ENCODE measurements at regions of chr12 and their contacts with region 1.

Region 1: DNA sequence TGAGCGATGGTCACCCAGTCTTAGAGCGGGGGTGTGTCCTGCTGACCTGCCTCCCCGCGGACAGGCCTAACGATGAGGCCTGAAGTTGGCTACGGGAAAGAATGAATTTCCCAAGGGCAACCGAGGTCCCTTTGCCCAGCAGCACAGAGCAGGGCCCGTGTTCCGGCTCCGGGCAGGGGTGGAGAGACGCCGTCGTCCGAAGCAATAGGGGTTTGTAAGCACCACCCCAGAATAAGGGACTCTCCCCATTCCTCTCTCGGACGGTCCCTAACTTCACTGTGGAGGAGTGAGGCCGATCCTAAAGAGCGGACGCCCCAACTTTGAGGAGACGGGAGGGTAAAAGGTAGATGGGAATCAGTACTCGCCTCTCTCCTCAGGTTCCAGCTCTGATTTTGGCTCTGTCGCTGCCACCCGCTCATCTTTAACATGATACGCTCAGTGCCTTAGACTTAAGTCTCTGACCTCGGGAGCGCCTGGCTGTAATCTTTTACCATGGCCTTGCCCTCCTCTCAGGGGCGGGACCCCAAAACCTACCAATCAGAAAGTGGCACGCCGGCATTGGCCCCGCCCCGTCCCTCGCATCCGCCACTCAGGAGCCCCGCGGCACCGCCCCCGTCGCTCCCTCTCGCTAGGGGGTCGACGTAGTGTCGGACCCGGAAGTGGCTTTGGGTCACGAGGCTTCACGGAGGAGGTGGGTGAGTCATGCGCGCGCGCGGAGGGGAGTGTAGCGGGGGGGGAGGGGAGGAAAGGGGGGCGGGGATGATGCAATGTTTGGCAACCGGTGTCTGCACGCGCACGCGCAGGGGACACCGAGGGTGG is at the start of gene DDIT3:
- DNase-seq: peak; percentile 98 to 99 (median 99)
- ATAC-seq: peak; percentile 89
- H3K4me3 ChIP-seq: peak within 1 kb of the TSS; percentile 100
- H3K4me3 Mint-ChIP-seq: peak within 1 kb of the TSS; percentile 89 to 99 (median 98)
- H3K27ac ChIP-seq: peak within 1 kb of the TSS; percentile 95
- H3K27ac Mint-ChIP-seq: peak within 1 kb of the TSS; percentile 97 to 100 (median 99)
- H3K4me1 ChIP-seq: peaks cover 32 to 41% of the 10 kb centered on the region in 2 donors
- H3K4me1 Mint-ChIP-seq: peaks cover 47 to 80% (median 56%) of the 10 kb centered on the region in 7 donors
- H3K27me3 ChIP-seq: no peaks in the 10 kb centered on the region
- H3K27me3 Mint-ChIP-seq: peaks cover 0 to 7% (median 0%) of the 10 kb centered on the region in 5 donors
- total RNA-seq, gene DDIT3: 19.6 to 124 (median 51.6) TPM

Region 2: DNA sequence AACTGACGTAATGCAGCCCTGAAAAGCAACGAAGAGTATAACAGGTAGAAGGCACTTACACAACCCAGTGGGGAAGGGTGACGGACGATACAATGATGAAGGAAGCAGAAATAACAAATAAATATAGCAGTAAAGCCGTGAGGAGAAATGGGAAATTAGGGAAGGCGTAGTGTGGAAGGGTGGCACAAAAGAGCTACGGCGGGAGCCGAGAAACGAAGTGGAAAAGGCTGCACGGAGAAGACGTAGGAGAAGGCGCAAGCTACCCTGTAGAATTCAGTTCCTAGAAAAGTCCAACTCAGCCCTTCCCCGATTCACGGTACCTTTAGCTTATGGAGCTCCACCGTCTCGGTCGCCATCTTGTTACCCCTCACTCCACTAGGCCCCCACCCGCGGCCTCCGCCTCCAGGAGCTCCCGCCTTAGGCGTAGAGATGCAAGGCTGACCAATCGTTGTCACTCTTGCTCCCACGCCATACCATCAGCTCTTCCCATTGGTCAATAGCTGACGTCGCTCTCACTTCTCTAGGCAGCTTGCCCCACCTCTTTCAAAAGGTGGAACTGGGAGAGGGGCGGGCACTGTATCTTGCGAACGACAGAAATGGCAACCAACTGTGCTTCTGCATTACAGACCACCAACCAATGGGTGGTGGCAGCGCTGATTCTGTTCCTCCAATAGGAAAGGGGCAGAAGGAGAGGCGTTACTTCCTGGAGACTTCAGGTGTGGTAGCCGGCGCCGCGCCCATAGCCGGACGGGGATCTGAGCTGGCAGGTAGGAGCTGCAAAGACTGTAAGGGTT is 1702.7 kb before region 1 on chr12 and contains the starts of genes ORMDL2 and SARNP:
- CTCF ChIA-PET with region 1: no interaction called
- POLR2A ChIA-PET with region 1: no interaction called
- intact Hi-C with region 1: loop called in 1 of 2 experiments (anchors 2 kb)
- DNase-seq: peak; percentile 81 to 99 (median 98)
- ATAC-seq: peak; percentile 96
- H3K4me3 ChIP-seq: peak within 1 kb of the TSS; percentile 94
- H3K4me3 Mint-ChIP-seq: no peak within 1 kb of the TSS
- H3K27ac ChIP-seq: peak within 1 kb of the TSS; percentile 88
- H3K27ac Mint-ChIP-seq: no peak within 1 kb of the TSS
- H3K4me1 ChIP-seq: peaks cover 22 to 41% of the 10 kb centered on the region in 2 donors
- H3K4me1 Mint-ChIP-seq: peaks cover 32 to 45% (median 37%) of the 10 kb centered on the region in 7 donors
- H3K27me3 ChIP-seq: no peaks in the 10 kb centered on the region
- H3K27me3 Mint-ChIP-seq: no peaks in the 10 kb centered on the region
- total RNA-seq, gene ORMDL2: 12.3 to 67.3 (median 40.5) TPM
- total RNA-seq, gene SARNP: 28.0 to 73.0 (median 41.7) TPM

Region 3: DNA sequence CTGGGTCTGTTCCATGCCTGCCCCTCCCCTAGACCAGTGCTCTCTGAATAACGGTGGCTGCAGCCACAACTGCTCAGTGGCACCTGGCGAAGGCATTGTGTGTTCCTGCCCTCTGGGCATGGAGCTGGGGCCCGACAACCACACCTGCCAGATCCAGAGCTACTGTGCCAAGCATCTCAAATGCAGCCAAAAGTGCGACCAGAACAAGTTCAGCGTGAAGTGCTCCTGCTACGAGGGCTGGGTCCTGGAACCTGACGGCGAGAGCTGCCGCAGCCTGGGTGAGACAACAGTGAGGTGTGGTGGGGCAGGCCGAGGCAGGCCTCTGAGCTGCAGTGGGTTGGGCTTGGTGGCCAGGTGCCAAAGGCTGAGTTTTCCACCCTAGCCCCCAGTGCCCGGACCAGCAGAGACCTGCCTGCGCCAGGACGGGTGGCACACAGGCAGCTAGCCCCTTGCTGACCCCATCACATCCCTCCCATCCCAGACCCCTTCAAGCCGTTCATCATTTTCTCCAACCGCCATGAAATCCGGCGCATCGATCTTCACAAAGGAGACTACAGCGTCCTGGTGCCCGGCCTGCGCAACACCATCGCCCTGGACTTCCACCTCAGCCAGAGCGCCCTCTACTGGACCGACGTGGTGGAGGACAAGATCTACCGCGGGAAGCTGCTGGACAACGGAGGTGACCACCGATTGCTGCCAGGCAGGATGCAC is 344.7 kb before region 1 on chr12:
- CTCF ChIA-PET with region 1: no interaction called
- POLR2A ChIA-PET with region 1: no interaction called
- intact Hi-C with region 1: no loop called
- DNase-seq: peak in 4 of 9 donors; percentile 13 to 66 (median 26)
- ATAC-seq: peak; percentile 63
- H3K4me3 ChIP-seq: no peak overlapping the region
- H3K4me3 Mint-ChIP-seq: no peak overlapping the region
- H3K27ac ChIP-seq: no peak overlapping the region
- H3K27ac Mint-ChIP-seq: peak overlapping the region in 1 of 9 donors; percentile 46
- H3K4me1 ChIP-seq: no peaks in the 10 kb centered on the region
- H3K4me1 Mint-ChIP-seq: peaks cover 0 to 6% (median 0%) of the 10 kb centered on the region in 7 donors
- H3K27me3 ChIP-seq: no peaks in the 10 kb centered on the region
- H3K27me3 Mint-ChIP-seq: no peaks in the 10 kb centered on the region

Region 4: DNA sequence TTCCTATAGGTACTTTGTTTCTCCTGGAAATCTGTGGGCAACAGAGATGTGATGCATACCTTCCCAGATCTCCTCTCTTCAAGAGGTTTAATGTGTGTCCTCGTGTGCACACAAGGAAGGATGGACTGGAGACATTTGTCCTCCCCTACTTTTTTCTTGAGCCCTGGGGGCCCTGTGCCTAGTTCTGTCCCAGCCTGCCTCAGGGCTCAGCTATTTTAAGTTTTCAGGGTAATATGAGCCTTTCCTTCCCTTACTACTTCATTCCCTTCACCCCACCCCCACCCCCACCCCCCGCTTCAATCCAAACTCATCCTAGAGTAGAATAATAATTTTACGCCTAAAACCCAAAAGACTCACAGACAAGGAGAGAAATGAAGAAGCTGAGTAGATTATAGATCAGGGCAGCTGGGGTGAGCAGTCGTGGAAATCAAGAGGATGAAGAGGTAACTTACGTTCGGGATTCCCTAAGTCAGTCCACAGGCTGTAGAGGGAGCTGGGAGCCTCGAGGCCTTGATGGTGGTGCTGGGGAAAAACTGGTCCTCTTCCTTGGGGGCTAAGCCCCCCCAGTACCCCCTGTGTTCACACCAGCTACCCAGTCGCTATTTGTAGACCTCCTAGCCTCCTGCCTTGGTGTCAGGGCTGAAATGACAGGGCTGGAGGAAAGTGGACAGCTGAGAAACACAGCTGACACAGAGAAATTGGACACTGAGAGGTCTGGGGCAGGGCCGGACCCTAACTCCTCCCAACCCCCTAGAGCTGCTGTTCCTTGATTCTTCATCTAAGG is 269.5 kb before region 1 on chr12 and contains the start of gene STAC3:
- CTCF ChIA-PET with region 1: no interaction called
- POLR2A ChIA-PET with region 1: no interaction called
- intact Hi-C with region 1: no loop called
- DNase-seq: no peak
- ATAC-seq: no peak
- H3K4me3 ChIP-seq: no peak within 1 kb of the TSS
- H3K4me3 Mint-ChIP-seq: no peak within 1 kb of the TSS
- H3K27ac ChIP-seq: no peak within 1 kb of the TSS
- H3K27ac Mint-ChIP-seq: peak within 1 kb of the TSS in 1 of 9 donors; percentile 41
- H3K4me1 ChIP-seq: no peaks in the 10 kb centered on the region
- H3K4me1 Mint-ChIP-seq: peaks cover 0 to 9% (median 6%) of the 10 kb centered on the region in 7 donors
- H3K27me3 ChIP-seq: no peaks in the 10 kb centered on the region
- H3K27me3 Mint-ChIP-seq: peaks cover 0 to 4% (median 0%) of the 10 kb centered on the region in 5 donors
- total RNA-seq, gene STAC3: 2.5 to 7.3 (median 5.6) TPM

Region 5: GRCh38 chr12:57430931-57431720 is 89.1 kb before region 1 on chr12 and contains the start of gene R3HDM2:
- CTCF ChIA-PET with region 1: no interaction called
- POLR2A ChIA-PET with region 1: no interaction called
- intact Hi-C with region 1: loop called in 1 of 2 experiments (anchors 1 kb)
- DNase-seq: peak; percentile 83 to 96 (median 94)
- ATAC-seq: peak; percentile 95
- H3K4me3 ChIP-seq: peak within 1 kb of the TSS; percentile 55
- H3K4me3 Mint-ChIP-seq: peak within 1 kb of the TSS; percentile 88 to 100 (median 98)
- H3K27ac ChIP-seq: peak within 1 kb of the TSS; percentile 85
- H3K27ac Mint-ChIP-seq: peak within 1 kb of the TSS; percentile 97 to 100 (median 99)
- H3K4me1 ChIP-seq: peaks cover 8 to 17% of the 10 kb centered on the region in 2 donors
- H3K4me1 Mint-ChIP-seq: peaks cover 27 to 53% (median 39%) of the 10 kb centered on the region in 7 donors
- H3K27me3 ChIP-seq: no peaks in the 10 kb centered on the region
- H3K27me3 Mint-ChIP-seq: no peaks in the 10 kb centered on the region
- total RNA-seq, gene R3HDM2: 74.9 to 145 (median 120) TPM

Region 6: GRCh38 chr12:57546438-57547383 is 26.4 kb after region 1 on chr12 and contains the start of gene DCTN2:
- CTCF ChIA-PET with region 1: no interaction called
- POLR2A ChIA-PET with region 1: interaction called, 5 read pairs
- intact Hi-C with region 1: loop called (anchors 1 kb)
- DNase-seq: peak; percentile 63 to 94 (median 88)
- ATAC-seq: peak; percentile 98
- H3K4me3 ChIP-seq: peak within 1 kb of the TSS; percentile 74
- H3K4me3 Mint-ChIP-seq: peak within 1 kb of the TSS; percentile 88 to 100 (median 98)
- H3K27ac ChIP-seq: peak within 1 kb of the TSS; percentile 88
- H3K27ac Mint-ChIP-seq: peak within 1 kb of the TSS; percentile 85 to 96 (median 92)
- H3K4me1 ChIP-seq: peaks cover 10 to 16% of the 10 kb centered on the region in 2 donors
- H3K4me1 Mint-ChIP-seq: peaks cover 28 to 64% (median 55%) of the 10 kb centered on the region in 7 donors
- H3K27me3 ChIP-seq: no peaks in the 10 kb centered on the region
- H3K27me3 Mint-ChIP-seq: peaks cover 0 to 28% (median 0%) of the 10 kb centered on the region in 5 donors
- total RNA-seq, gene DCTN2: 52.1 to 78.8 (median 63.0) TPM

Region 7: GRCh38 chr12:57604454-57604991 is 84.3 kb after region 1 on chr12 and contains the start of gene DTX3:
- CTCF ChIA-PET with region 1: no interaction called
- POLR2A ChIA-PET with region 1: no interaction called
- intact Hi-C with region 1: no loop called
- DNase-seq: peak in 6 of 9 donors; percentile 31 to 51 (median 43)
- ATAC-seq: peak; percentile 68
- H3K4me3 ChIP-seq: peak within 1 kb of the TSS; percentile 71
- H3K4me3 Mint-ChIP-seq: peak within 1 kb of the TSS; percentile 81 to 91 (median 86)
- H3K27ac ChIP-seq: peak within 1 kb of the TSS; percentile 70
- H3K27ac Mint-ChIP-seq: peak within 1 kb of the TSS; percentile 84 to 93 (median 87)
- H3K4me1 ChIP-seq: peaks cover 19 to 20% of the 10 kb centered on the region in 2 donors
- H3K4me1 Mint-ChIP-seq: peaks cover 20 to 40% (median 32%) of the 10 kb centered on the region in 7 donors
- H3K27me3 ChIP-seq: no peaks in the 10 kb centered on the region
- H3K27me3 Mint-ChIP-seq: peaks cover 0 to 2% (median 0%) of the 10 kb centered on the region in 5 donors
- total RNA-seq, gene DTX3: 25.1 to 42.5 (median 35.6) TPM

Region 8: DNA sequence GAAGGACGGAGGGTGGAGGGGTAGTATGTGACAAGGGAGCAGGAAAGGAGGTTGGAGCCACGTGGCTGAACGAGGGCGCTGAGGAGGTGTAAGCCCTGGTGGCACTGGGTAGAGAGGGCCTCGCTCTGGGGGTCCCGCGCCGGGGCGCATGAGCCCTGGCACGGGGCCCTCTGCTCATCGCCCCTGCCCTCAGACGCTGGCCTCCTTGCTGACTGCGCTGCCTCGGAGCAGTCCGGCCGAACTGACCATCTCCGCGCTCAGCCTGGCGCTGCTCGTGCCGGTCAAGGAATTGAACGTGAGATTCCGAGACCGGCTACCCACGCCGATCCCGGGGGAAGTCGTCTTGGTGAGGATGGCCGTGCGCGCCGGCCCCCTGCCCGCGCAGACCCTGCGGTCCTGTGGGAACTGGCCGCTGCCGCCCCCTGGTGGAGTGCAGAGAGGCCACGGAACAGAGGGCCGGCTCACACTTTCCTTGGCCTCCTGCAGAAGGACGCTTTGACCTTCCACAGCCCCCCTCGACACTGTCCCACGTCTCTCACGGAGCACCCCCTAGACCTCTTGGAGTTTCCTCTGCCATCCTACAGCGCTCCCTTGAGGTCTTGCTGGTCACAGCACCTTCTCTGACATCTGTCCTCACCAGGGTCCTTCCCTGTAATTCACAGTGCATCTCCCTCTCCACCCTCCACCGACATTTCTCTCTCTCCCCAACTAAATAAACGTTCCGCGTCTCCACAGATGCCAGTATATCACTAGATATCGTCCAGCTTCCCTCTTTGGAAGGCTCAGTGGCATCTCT is 101.4 kb after region 1 on chr12:
- CTCF ChIA-PET with region 1: interaction called, 3 read pairs
- POLR2A ChIA-PET with region 1: no interaction called
- intact Hi-C with region 1: loop called in 1 of 2 experiments (anchors 1 kb)
- DNase-seq: peak in 7 of 9 donors; percentile 35 to 75 (median 44)
- ATAC-seq: peak; percentile 76
- H3K4me3 ChIP-seq: peak overlapping the region; percentile 54
- H3K4me3 Mint-ChIP-seq: peak overlapping the region; percentile 59 to 87 (median 80)
- H3K27ac ChIP-seq: no peak overlapping the region
- H3K27ac Mint-ChIP-seq: no peak overlapping the region
- H3K4me1 ChIP-seq: peaks cover 20 to 30% of the 10 kb centered on the region in 2 donors
- H3K4me1 Mint-ChIP-seq: peaks cover 19 to 33% (median 30%) of the 10 kb centered on the region in 7 donors
- H3K27me3 ChIP-seq: peaks cover 17 to 50% of the 10 kb centered on the region in 2 donors
- H3K27me3 Mint-ChIP-seq: peaks cover 86 to 100% (median 87%) of the 10 kb centered on the region in 5 donors

Region 9: DNA sequence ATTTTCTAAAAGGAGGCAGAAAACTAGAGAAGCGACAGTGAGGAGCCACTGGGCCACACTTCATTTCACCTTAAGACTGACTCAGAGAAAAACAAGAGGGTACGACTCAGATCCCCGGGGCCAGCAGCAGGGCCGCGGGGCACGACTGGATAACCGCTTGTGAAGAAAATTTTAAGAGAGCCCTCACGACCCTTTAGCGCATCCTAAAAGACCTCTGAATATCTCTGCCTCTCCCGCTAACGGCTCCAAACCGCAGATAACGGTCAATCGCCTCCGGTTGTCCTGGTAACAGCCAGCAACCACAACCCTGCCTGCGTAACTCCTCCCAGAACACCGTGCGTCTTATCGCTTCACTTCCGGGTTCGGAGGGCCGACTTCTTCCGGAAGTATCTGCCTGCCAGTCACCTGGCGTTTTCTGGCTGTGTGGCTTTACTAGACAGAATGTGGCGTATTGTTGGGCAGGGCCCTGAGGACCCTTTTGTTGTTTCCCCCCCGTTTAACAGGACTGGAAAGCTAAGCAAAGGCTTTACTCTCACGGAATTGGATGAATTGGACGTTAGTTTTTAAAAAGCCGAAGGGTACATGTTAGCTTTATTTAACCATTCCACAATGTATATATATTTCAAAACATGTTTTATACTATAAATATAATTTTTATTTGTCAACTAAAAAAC is 415.7 kb after region 1 on chr12:
- CTCF ChIA-PET with region 1: no interaction called
- POLR2A ChIA-PET with region 1: no interaction called
- intact Hi-C with region 1: loop called in 1 of 2 experiments (anchors 1 kb)
- DNase-seq: peak; percentile 65 to 95 (median 92)
- ATAC-seq: peak; percentile 96
- H3K4me3 ChIP-seq: peak overlapping the region; percentile 71
- H3K4me3 Mint-ChIP-seq: peak overlapping the region; percentile 84 to 99 (median 98)
- H3K27ac ChIP-seq: peak overlapping the region; percentile 98
- H3K27ac Mint-ChIP-seq: peak overlapping the region; percentile 98 to 100 (median 99)
- H3K4me1 ChIP-seq: peaks cover 21 to 23% of the 10 kb centered on the region in 2 donors
- H3K4me1 Mint-ChIP-seq: peaks cover 21 to 47% (median 34%) of the 10 kb centered on the region in 7 donors
- H3K27me3 ChIP-seq: no peaks in the 10 kb centered on the region
- H3K27me3 Mint-ChIP-seq: peaks cover 0 to 2% (median 0%) of the 10 kb centered on the region in 5 donors

Region 10: GRCh38 chr12:58781609-58782008 is 1261.3 kb after region 1 on chr12:
- CTCF ChIA-PET with region 1: no interaction called
- POLR2A ChIA-PET with region 1: no interaction called
- intact Hi-C with region 1: no loop called
- DNase-seq: no peak
- ATAC-seq: no peak
- H3K4me3 ChIP-seq: no peak overlapping the region
- H3K4me3 Mint-ChIP-seq: no peak overlapping the region
- H3K27ac ChIP-seq: no peak overlapping the region
- H3K27ac Mint-ChIP-seq: no peak overlapping the region
- H3K4me1 ChIP-seq: no peaks in the 10 kb centered on the region
- H3K4me1 Mint-ChIP-seq: no peaks in the 10 kb centered on the region
- H3K27me3 ChIP-seq: no peaks in the 10 kb centered on the region
- H3K27me3 Mint-ChIP-seq: no peaks in the 10 kb centered on the region